Endothelial cell of umbilical vein (primary cell): ENCODE measurements at regions of chr16 and their contacts with region 1.

Region 1: GRCh38 chr16:11370084-11370931 is 25.0 kb downstream of the RMI2 start:
- DNase-seq: no peak
- H3K4me3 ChIP-seq: no peak overlapping the region
- H3K27ac ChIP-seq: no peak overlapping the region
- H3K4me1 ChIP-seq: no peaks in the 10 kb centered on the region
- H3K27me3 ChIP-seq: no peaks in the 10 kb centered on the region
- CTCF ChIP-seq: no peak
- POLR2A ChIP-seq: no peak

Region 2: GRCh38 chr16:11386791-11387546 is 16.7 kb after region 1 on chr16:
- CTCF ChIA-PET with region 1: interaction called, 13 read pairs
- POLR2A ChIA-PET with region 1: no interaction called
- dilution Hi-C with region 1: no loop called
- intact Hi-C with region 1: no loop called
- DNase-seq: peak; percentile 13
- H3K4me3 ChIP-seq: no peak overlapping the region
- H3K27ac ChIP-seq: no peak overlapping the region
- H3K4me1 ChIP-seq: no peaks in the 10 kb centered on the region
- H3K27me3 ChIP-seq: no peaks in the 10 kb centered on the region
- CTCF ChIP-seq: peak; percentile 47 to 70
- POLR2A ChIP-seq: no peak